PC-9 (cell line): ENCODE measurements at regions of chr15 and their contacts with region 1.

Region 1: GRCh38 chr15:51192521-51193280 is 98.0 kb upstream of the TNFAIP8L3 start:
- DNase-seq: peak; percentile 49 to 77
- H3K4me3 ChIP-seq: no peak overlapping the region
- H3K27ac ChIP-seq: no peak overlapping the region
- H3K4me1 ChIP-seq: no peaks in the 10 kb centered on the region
- H3K27me3 ChIP-seq: no peaks in the 10 kb centered on the region
- CTCF ChIP-seq: peak; percentile 87

Region 2: GRCh38 chr15:51132384-51133139 is 60.1 kb before region 1 on chr15:
- CTCF ChIA-PET with region 1: no interaction called
- POLR2A ChIA-PET with region 1: no interaction called
- intact Hi-C with region 1: loop called (anchors 5 kb)
- DNase-seq: peak in 1 of 2 experiments; percentile 13
- H3K4me3 ChIP-seq: no peak overlapping the region
- H3K27ac ChIP-seq: no peak overlapping the region
- H3K4me1 ChIP-seq: no peaks in the 10 kb centered on the region
- H3K27me3 ChIP-seq: no peaks in the 10 kb centered on the region
- CTCF ChIP-seq: peak; percentile 71